ENCODE measurements at regions of chr13 and their contacts with region 1.

Region 1: GRCh38 chr13:41652727-41653361 is 195.5 kb downstream of the RGCC start:
- DNase-seq: peak; percentile 7 to 58
- ATAC-seq: peak in 1 of 2 experiments; percentile 22; a peak in 1 of 6 replicates
- H3K4me3 ChIP-seq: no peak overlapping the region
- H3K27ac ChIP-seq: no peak overlapping the region; a peak in 1 of 6 replicates
- H3K4me1 ChIP-seq: peaks cover 37% of the 10 kb centered on the region
- CTCF ChIP-seq: peak; percentile 70; the same call in 2 of the 3 replicates
- EP300 ChIP-seq: no peak
- POLR2A ChIP-seq: no peak
- RAD21 ChIP-seq: peak; percentile 75 to 81

Region 2: GRCh38 chr13:41384755-41385503 is 267.9 kb before region 1 on chr13:
- CTCF ChIA-PET with region 1: interaction called, 14 read pairs
- POLR2A ChIA-PET with region 1: no interaction called
- DNase-seq: peak in 1 of 2 experiments; percentile 2
- ATAC-seq: no peak
- H3K4me3 ChIP-seq: no peak overlapping the region
- H3K27ac ChIP-seq: no peak overlapping the region
- H3K4me1 ChIP-seq: no peaks in the 10 kb centered on the region
- CTCF ChIP-seq: peak; percentile 33; the same call in 2 of the 3 replicates
- EP300 ChIP-seq: no peak
- POLR2A ChIP-seq: no peak
- RAD21 ChIP-seq: peak; percentile 33 to 35; a peak in 4 of 5 replicates

Region 3: GRCh38 chr13:41631296-41631965 is 21.4 kb before region 1 on chr13:
- CTCF ChIA-PET with region 1: no interaction called
- POLR2A ChIA-PET with region 1: no interaction called
- DNase-seq: no peak
- ATAC-seq: no peak
- H3K4me3 ChIP-seq: no peak overlapping the region
- H3K27ac ChIP-seq: no peak overlapping the region
- H3K4me1 ChIP-seq: no peaks in the 10 kb centered on the region
- CTCF ChIP-seq: no peak
- EP300 ChIP-seq: no peak
- POLR2A ChIP-seq: no peak
- RAD21 ChIP-seq: no peak